Panc1 (cell line): ENCODE measurements at regions of chr10 and their contacts with region 1.

Region 1: DNA sequence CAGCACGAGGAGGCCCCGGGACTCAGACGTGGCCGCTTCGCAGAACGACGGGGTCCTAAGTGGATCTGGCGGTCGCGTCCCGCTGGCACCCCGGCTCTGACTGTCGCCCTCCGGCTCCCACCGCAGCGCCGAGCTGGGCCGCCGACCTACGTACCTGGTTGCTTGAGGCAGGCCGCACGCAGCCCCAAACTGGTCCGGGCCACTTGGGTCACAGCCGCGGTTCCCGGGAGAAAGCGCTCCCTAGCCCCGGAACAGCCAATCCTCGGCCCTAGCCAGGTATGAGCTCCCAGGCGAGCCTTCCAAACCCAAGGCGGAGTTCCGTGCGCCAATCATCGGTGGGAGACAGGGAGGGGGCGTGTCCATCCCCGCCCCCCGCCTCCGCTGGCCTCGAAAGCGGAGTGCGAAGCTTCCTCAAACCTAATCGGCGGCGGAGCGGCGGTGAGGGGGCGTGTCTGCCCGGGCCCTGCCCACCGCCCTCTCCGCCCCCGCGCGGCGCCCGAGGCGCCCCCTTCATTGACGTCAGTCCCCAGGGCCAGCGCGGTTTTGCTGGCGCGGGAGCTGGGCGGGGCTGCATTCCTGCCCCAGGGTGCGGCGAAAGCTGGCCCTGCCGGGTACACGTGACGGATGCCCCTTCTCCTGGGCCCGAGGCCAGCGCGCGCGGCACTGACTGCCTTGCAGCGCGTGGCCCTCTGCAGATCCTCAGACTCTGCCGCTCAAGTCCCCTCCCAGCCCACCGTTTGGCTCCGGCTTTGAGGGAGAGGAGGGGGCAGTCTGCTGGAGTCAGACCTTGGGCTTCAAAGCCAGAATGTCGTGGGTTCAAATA is at the start of gene AVPI1:
- DNase-seq: peak; percentile 87
- ATAC-seq: peak; percentile 92
- H3K4me3 ChIP-seq: peak within 1 kb of the TSS; percentile 72 to 73
- H3K27ac ChIP-seq: peak within 1 kb of the TSS; percentile 95
- H3K4me1 ChIP-seq: peaks cover 35% of the 10 kb centered on the region
- H3K27me3 ChIP-seq: no peaks in the 10 kb centered on the region
- CTCF ChIP-seq: no peak
- total RNA-seq, gene AVPI1: 8.0 TPM

Region 2: GRCh38 chr10:97676770-97677581 is 10.2 kb before region 1 on chr10:
- CTCF ChIA-PET with region 1: interaction called, 12 read pairs
- POLR2A ChIA-PET with region 1: no interaction called
- in situ Hi-C with region 1: no loop called
- intact Hi-C with region 1: no loop called
- DNase-seq: peak; percentile 35
- ATAC-seq: peak; percentile 83
- H3K4me3 ChIP-seq: no peak overlapping the region
- H3K27ac ChIP-seq: no peak overlapping the region
- H3K4me1 ChIP-seq: no peaks in the 10 kb centered on the region
- H3K27me3 ChIP-seq: no peaks in the 10 kb centered on the region
- CTCF ChIP-seq: peak; percentile 97

Region 3: DNA sequence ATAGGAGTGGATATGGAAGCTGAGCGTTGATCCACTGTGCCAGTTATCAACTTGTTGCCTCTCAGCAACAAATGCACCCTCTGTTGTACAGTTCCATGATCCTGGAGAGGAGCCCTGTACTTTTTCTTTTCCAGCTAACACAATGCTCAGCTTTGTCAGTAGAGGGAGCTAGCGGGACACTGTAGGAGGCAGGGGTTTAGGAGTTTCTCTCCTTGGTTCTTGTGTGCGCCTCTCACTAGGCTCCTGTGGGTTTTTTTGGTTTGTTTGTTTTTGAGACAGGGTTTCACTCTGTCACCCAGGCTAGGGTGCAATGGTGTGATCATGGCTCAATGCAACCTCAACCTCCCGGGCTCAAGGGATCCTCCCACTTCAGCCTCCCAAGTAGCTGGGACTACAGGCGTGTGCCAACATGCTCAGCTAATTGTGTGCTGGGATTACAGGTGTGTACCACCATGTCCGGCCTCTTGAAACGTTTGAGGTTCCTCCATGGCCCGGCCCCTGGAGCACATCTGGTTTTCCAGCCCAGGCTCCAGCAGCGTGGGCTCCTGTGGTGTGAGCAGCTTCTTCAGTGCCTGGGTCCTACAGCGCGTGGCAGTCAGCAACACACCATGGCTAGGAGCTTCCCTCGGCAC is 14.4 kb after region 1 on chr10:
- CTCF ChIA-PET with region 1: interaction called, 13 read pairs
- POLR2A ChIA-PET with region 1: no interaction called
- in situ Hi-C with region 1: no loop called
- intact Hi-C with region 1: no loop called
- DNase-seq: peak; percentile 65
- ATAC-seq: peak; percentile 96
- H3K4me3 ChIP-seq: no peak overlapping the region
- H3K27ac ChIP-seq: no peak overlapping the region
- H3K4me1 ChIP-seq: no peaks in the 10 kb centered on the region
- H3K27me3 ChIP-seq: no peaks in the 10 kb centered on the region
- CTCF ChIP-seq: peak; percentile 97

Region 4: GRCh38 chr10:97724341-97724941 is 37.3 kb after region 1 on chr10:
- CTCF ChIA-PET with region 1: no interaction called
- POLR2A ChIA-PET with region 1: interaction called, 13 read pairs
- in situ Hi-C with region 1: loop called (anchors 5 kb)
- intact Hi-C with region 1: no loop called
- DNase-seq: no peak
- ATAC-seq: no peak
- H3K4me3 ChIP-seq: no peak overlapping the region
- H3K27ac ChIP-seq: no peak overlapping the region
- H3K4me1 ChIP-seq: no peaks in the 10 kb centered on the region
- H3K27me3 ChIP-seq: no peaks in the 10 kb centered on the region
- CTCF ChIP-seq: no peak

Region 5: DNA sequence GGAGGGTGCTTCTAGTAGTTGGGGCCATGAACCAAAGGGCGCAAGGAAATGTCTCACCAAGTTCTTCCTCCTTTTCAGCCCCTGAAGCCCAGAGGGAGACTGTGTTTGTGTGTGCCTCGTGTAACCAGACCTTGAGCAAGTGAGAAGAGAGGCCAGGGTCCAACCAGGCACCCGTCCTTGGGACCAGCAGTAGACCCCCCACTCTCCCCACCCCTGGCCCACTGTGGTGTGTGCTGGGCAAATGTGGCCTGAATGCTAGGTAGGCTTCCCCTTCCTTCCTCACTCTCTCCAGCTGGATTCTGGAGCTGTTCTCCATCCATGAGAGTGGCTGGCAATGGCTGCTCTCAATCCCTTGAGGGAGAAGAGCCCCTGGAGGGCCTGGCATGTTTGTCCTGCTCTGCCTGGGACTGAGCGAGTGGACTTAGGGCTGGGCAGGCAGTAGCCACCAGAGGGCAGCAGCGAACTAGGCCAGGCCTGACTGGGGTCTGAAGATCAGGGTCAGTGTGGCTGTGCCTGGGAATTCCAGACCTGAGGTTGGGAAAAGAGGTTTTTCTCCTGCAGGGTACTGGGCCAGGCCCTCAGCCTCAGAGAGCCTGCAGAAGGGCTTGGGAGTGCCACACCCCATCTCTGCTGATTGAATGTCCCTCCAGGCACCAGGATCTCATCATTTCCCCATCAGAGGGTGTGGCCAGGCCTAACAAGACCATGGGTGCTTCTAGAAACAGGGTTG is 72.2 kb after region 1 on chr10:
- CTCF ChIA-PET with region 1: no interaction called
- POLR2A ChIA-PET with region 1: no interaction called
- in situ Hi-C with region 1: no loop called
- intact Hi-C with region 1: no loop called
- DNase-seq: peak; percentile 32
- ATAC-seq: peak; percentile 93
- H3K4me3 ChIP-seq: no peak overlapping the region
- H3K27ac ChIP-seq: no peak overlapping the region
- H3K4me1 ChIP-seq: no peaks in the 10 kb centered on the region
- H3K27me3 ChIP-seq: no peaks in the 10 kb centered on the region
- CTCF ChIP-seq: peak; percentile 98